Activated CD8-positive, alpha-beta T cell treated with anti-CD3 and anti-CD28 coated beads, Interleukin-2, amount 10 ng/mL, durations not matched to agents 7 days and 5 days (primary cell): ENCODE measurements at regions of chr2 and their contacts with region 1.

Region 1: DNA sequence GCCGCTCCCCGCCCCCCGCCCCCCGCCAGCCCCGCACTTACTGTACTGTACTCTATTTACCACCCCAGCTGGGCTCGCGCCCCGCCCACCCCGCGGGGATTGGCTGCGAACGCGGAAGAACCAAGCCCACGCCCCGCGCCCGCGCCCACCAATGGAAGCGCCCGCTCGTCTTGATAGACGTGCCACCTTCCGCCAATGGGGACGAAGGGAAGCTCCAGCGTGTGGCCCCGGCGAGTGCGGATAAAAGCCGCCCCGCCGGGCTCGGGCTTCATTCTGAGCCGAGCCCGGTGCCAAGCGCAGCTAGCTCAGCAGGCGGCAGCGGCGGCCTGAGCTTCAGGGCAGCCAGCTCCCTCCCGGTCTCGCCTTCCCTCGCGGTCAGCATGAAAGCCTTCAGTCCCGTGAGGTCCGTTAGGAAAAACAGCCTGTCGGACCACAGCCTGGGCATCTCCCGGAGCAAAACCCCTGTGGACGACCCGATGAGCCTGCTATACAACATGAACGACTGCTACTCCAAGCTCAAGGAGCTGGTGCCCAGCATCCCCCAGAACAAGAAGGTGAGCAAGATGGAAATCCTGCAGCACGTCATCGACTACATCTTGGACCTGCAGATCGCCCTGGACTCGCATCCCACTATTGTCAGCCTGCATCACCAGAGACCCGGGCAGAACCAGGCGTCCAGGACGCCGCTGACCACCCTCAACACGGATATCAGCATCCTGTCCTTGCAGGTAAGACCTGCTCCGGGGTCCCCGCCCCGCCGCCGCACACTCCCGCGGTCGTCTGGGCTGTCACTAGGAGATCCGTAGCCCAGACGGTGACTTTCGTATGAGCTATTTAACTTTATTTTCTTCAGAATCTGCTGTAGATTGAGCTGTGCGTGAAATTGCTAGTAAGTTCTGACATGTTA is at the start of gene ID2:
- DNase-seq: peak; percentile 99
- ATAC-seq: peak; percentile 68
- H3K4me3 Mint-ChIP-seq: peak within 1 kb of the TSS; percentile 99
- H3K27ac Mint-ChIP-seq: peak within 1 kb of the TSS; percentile 97
- H3K4me1 Mint-ChIP-seq: peaks cover 39% of the 10 kb centered on the region
- H3K27me3 Mint-ChIP-seq: peaks cover 11% of the 10 kb centered on the region
- total RNA-seq, gene ID2: 257 to 263 TPM

Region 2: DNA sequence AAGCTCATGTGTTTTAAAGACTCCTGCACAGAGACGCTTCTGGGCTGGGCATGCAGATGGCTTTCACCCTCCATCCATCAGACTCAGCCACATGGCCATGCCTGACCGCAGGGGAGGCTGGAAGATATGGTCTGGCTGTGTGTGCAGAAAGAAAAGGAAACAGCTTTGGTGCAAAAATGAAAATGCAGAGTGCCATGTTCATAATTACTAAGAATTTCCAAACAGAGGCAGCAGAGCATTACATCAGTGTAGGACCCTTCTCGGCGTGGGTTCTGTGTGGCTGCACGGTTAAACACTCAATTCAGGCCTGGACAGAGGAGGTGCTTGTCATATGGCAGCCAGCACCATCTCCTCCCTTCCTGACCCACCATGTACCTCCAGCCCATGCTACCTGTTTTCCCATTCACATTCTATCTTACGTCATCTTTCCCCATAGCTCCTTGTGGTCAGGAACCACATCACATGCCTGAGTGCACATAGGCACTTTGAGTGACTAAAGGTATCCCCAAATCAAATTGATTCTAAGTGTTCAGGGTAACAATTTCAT is 200.5 kb before region 1 on chr2:
- CTCF ChIA-PET with region 1: interaction called, 3 read pairs
- POLR2A ChIA-PET with region 1: interaction called, 12 read pairs
- DNase-seq: peak; percentile 64
- ATAC-seq: peak; percentile 68
- H3K4me3 Mint-ChIP-seq: peak overlapping the region; percentile 0
- H3K27ac Mint-ChIP-seq: peak overlapping the region; percentile 71
- H3K4me1 Mint-ChIP-seq: peaks cover 91% of the 10 kb centered on the region
- H3K27me3 Mint-ChIP-seq: no peaks in the 10 kb centered on the region

Region 3: GRCh38 chr2:8502316-8502715 is 179.7 kb before region 1 on chr2:
- CTCF ChIA-PET with region 1: no interaction called
- POLR2A ChIA-PET with region 1: no interaction called
- DNase-seq: no peak
- ATAC-seq: no peak
- H3K4me3 Mint-ChIP-seq: no peak overlapping the region
- H3K27ac Mint-ChIP-seq: no peak overlapping the region
- H3K4me1 Mint-ChIP-seq: peaks cover 22% of the 10 kb centered on the region
- H3K27me3 Mint-ChIP-seq: peaks cover 2% of the 10 kb centered on the region

Region 4: DNA sequence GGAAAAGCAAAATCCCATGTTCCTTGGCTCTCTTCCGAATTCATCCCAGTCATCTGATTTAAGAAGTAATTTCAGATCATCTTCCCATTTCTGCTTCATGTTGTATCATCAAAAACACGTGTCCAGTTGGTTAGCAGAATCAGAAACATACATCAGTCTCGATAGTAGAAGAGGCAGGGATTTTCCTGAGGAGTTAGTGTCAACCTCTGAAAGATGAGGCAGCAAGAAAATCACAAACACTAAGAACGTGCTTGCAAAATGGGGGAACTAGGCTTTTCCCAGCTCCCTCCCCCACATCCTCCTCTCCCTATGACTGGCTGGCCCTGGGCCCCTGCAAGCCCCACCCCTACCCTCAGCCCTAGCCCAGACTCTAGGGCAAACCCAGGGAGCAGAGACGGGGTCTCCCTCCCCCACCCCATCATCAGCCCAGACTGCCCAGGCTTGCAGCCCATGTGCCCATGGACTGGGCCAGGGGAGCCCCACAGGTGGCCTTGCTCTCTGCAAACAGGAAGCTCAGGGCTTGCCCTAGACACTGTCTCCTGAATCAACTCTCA is 161.2 kb before region 1 on chr2:
- CTCF ChIA-PET with region 1: interaction called, 5 read pairs
- POLR2A ChIA-PET with region 1: interaction called, 14 read pairs
- DNase-seq: no peak
- ATAC-seq: no peak
- H3K4me3 Mint-ChIP-seq: no peak overlapping the region
- H3K27ac Mint-ChIP-seq: no peak overlapping the region
- H3K4me1 Mint-ChIP-seq: peaks cover 91% of the 10 kb centered on the region
- H3K27me3 Mint-ChIP-seq: no peaks in the 10 kb centered on the region

Region 5: GRCh38 chr2:8583400-8584173 is 98.5 kb before region 1 on chr2:
- CTCF ChIA-PET with region 1: interaction called, 3 read pairs
- POLR2A ChIA-PET with region 1: interaction called, 26 read pairs
- DNase-seq: peak; percentile 88
- ATAC-seq: peak; percentile 82
- H3K4me3 Mint-ChIP-seq: peak overlapping the region; percentile 47
- H3K27ac Mint-ChIP-seq: peak overlapping the region; percentile 60
- H3K4me1 Mint-ChIP-seq: peaks cover 78% of the 10 kb centered on the region
- H3K27me3 Mint-ChIP-seq: peaks cover 2% of the 10 kb centered on the region

Region 6: GRCh38 chr2:8701681-8702379 is 19.8 kb after region 1 on chr2:
- CTCF ChIA-PET with region 1: no interaction called
- POLR2A ChIA-PET with region 1: no interaction called
- DNase-seq: no peak
- ATAC-seq: no peak
- H3K4me3 Mint-ChIP-seq: no peak overlapping the region
- H3K27ac Mint-ChIP-seq: no peak overlapping the region
- H3K4me1 Mint-ChIP-seq: no peaks in the 10 kb centered on the region
- H3K27me3 Mint-ChIP-seq: no peaks in the 10 kb centered on the region